Mammary epithelial cell (primary cell): ENCODE measurements at regions of chr20 and their contacts with region 1.

Region 1: GRCh38 chr20:45362804-45363610 is at the start of gene SYS1:
- DNase-seq: peak; percentile 98
- H3K4me3 ChIP-seq: peak within 1 kb of the TSS; percentile 58 to 66 (median 59)
- H3K27ac ChIP-seq: peak within 1 kb of the TSS; percentile 88
- H3K4me1 ChIP-seq: peaks cover 37% of the 10 kb centered on the region
- H3K27me3 ChIP-seq: no peaks in the 10 kb centered on the region
- CTCF ChIP-seq: peak; percentile 84 to 85
- total RNA-seq, gene SYS1: 20.9 to 25.0 TPM

Region 2: GRCh38 chr20:45322952-45323383 is 40.0 kb before region 1 on chr20:
- CTCF ChIA-PET with region 1: interaction called, 8 read pairs
- dilution Hi-C with region 1: no loop called
- in situ Hi-C with region 1: no loop called
- intact Hi-C with region 1: loop called (anchors 1 kb)
- DNase-seq: peak; percentile 51
- H3K4me3 ChIP-seq: no peak overlapping the region
- H3K27ac ChIP-seq: peak overlapping the region; percentile 1
- H3K4me1 ChIP-seq: no peaks in the 10 kb centered on the region
- H3K27me3 ChIP-seq: no peaks in the 10 kb centered on the region
- CTCF ChIP-seq: no peak

Region 3: GRCh38 chr20:45337367-45338120 is 25.5 kb before region 1 on chr20:
- CTCF ChIA-PET with region 1: no interaction called
- dilution Hi-C with region 1: no loop called
- in situ Hi-C with region 1: no loop called
- intact Hi-C with region 1: loop called (anchors 1 kb)
- DNase-seq: peak; percentile 81
- H3K4me3 ChIP-seq: no peak overlapping the region
- H3K27ac ChIP-seq: peak overlapping the region; percentile 96
- H3K4me1 ChIP-seq: peaks cover 71% of the 10 kb centered on the region
- H3K27me3 ChIP-seq: no peaks in the 10 kb centered on the region
- CTCF ChIP-seq: no peak

Region 4: DNA sequence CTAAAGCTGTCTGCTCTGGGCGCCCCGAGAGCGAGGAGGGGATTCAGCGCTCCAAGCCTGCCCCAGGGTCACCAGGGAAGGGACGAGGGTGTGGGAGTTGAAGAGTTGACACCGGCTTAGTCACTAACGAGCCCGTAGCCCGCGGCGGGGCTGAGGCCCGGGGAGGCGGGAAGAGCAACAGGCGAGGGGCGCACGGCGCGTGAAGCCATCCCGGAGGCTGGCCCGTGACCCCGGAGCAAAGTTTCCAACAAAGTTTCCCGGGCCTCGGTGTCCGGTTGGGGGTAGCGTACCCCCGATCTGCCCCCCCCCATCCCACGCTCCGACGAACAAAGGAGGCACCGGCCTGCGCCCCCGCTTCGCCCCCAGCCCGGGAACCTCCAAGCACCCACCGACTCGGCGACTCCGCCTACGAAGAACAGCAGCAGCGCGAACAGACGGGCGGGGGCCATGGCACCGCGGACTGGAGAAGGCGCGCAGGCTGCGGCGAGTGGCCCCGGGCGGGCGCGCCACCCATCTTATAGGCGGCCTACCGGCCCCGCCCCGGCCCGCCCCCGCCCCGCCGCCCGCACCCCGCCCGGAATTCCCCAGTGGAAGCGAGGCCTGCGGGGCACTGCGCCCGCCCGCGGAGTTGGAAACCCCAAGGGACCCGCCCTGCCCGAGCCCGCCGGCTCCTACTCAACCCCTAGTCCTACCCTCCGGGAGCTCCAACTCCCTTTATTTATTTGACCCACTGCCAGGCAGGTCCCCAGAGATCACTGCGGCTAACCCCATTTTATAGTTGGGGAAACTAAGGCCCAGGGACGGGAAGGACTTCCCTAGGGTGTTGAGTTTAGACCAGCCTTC is 14.8 kb before region 1 on chr20 and contains the start of gene SDC4:
- CTCF ChIA-PET with region 1: no interaction called
- dilution Hi-C with region 1: no loop called
- in situ Hi-C with region 1: no loop called
- intact Hi-C with region 1: loop called (anchors 1 kb)
- DNase-seq: peak; percentile 84
- H3K4me3 ChIP-seq: peak within 1 kb of the TSS; percentile 75 to 87 (median 82)
- H3K27ac ChIP-seq: peak within 1 kb of the TSS; percentile 96
- H3K4me1 ChIP-seq: peaks cover 34% of the 10 kb centered on the region
- H3K27me3 ChIP-seq: no peaks in the 10 kb centered on the region
- CTCF ChIP-seq: no peak
- total RNA-seq, gene SDC4: 276 to 550 TPM

Region 5: GRCh38 chr20:45410899-45411298 is 47.9 kb after region 1 on chr20:
- CTCF ChIA-PET with region 1: interaction called, 3 read pairs
- dilution Hi-C with region 1: loop called (anchors 5 kb)
- in situ Hi-C with region 1: no loop called
- intact Hi-C with region 1: loop called (anchors 5 kb)
- DNase-seq: no peak
- H3K4me3 ChIP-seq: no peak overlapping the region
- H3K27ac ChIP-seq: no peak overlapping the region
- H3K4me1 ChIP-seq: peaks cover 10% of the 10 kb centered on the region
- H3K27me3 ChIP-seq: no peaks in the 10 kb centered on the region
- CTCF ChIP-seq: no peak

Region 6: GRCh38 chr20:45415774-45416637 is 53.0 kb after region 1 on chr20 and contains the start of gene PIGT:
- CTCF ChIA-PET with region 1: interaction called, 3 read pairs
- dilution Hi-C with region 1: loop called (anchors 5 kb)
- in situ Hi-C with region 1: no loop called
- intact Hi-C with region 1: loop called (anchors 5 kb)
- DNase-seq: peak; percentile 77
- H3K4me3 ChIP-seq: peak within 1 kb of the TSS; percentile 79 to 93 (median 88)
- H3K27ac ChIP-seq: peak within 1 kb of the TSS; percentile 70
- H3K4me1 ChIP-seq: peaks cover 17% of the 10 kb centered on the region
- H3K27me3 ChIP-seq: no peaks in the 10 kb centered on the region
- CTCF ChIP-seq: no peak
- total RNA-seq, gene PIGT: 31.0 to 69.2 TPM

Region 7: GRCh38 chr20:45436732-45437391 is 73.9 kb after region 1 on chr20:
- CTCF ChIA-PET with region 1: interaction called, 14 read pairs
- dilution Hi-C with region 1: no loop called
- in situ Hi-C with region 1: no loop called
- intact Hi-C with region 1: loop called (anchors 1 kb)
- DNase-seq: peak; percentile 70
- H3K4me3 ChIP-seq: peak overlapping the region; percentile 62 to 80 (median 72)
- H3K27ac ChIP-seq: no peak overlapping the region
- H3K4me1 ChIP-seq: no peaks in the 10 kb centered on the region
- H3K27me3 ChIP-seq: no peaks in the 10 kb centered on the region
- CTCF ChIP-seq: peak; percentile 88 to 98

Region 8: GRCh38 chr20:46157625-46158024 is 794.6 kb after region 1 on chr20:
- CTCF ChIA-PET with region 1: no interaction called
- dilution Hi-C with region 1: no loop called
- in situ Hi-C with region 1: no loop called
- intact Hi-C with region 1: no loop called
- DNase-seq: no peak
- H3K4me3 ChIP-seq: no peak overlapping the region
- H3K27ac ChIP-seq: no peak overlapping the region
- H3K4me1 ChIP-seq: no peaks in the 10 kb centered on the region
- H3K27me3 ChIP-seq: no peaks in the 10 kb centered on the region
- CTCF ChIP-seq: no peak